Calu3 (cell line): ENCODE measurements at regions of chr3 and their contacts with region 1.

Region 1: DNA sequence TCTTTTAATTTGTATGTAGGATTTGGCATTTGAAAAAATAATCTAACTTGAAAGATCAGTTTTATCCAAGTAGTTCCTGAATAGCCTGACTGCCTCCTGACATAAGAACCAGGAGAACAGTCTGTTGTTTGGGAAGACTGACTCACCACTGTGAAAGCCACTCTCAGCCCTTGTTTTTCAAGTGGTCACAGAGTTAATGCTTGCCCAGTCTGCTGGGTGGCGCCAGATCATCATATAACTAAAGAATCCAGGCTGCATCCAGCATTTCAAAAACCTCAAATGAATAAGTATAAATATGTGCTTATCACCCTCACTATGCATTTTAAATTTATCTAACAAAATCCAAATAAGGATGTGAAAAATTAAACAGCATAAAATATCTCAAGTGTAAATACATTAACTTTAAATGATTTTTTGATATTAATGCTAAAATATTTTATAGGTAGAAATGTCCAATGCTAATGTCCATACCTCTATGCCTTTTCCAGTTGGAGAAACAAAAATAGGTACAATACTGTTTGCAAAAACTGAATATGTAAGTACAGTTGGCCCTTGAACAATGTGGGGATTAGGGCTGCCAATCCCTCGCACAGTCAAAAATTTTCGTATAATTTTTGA is 26.9 kb upstream of the ZBBX start:
- DNase-seq: peak; percentile 74
- H3K4me3 Mint-ChIP-seq: no peak overlapping the region
- H3K27ac Mint-ChIP-seq: no peak overlapping the region
- H3K4me1 Mint-ChIP-seq: peaks cover 7% of the 10 kb centered on the region
- H3K27me3 Mint-ChIP-seq: no peaks in the 10 kb centered on the region
- CTCF ChIP-seq: peak; percentile 49

Region 2: DNA sequence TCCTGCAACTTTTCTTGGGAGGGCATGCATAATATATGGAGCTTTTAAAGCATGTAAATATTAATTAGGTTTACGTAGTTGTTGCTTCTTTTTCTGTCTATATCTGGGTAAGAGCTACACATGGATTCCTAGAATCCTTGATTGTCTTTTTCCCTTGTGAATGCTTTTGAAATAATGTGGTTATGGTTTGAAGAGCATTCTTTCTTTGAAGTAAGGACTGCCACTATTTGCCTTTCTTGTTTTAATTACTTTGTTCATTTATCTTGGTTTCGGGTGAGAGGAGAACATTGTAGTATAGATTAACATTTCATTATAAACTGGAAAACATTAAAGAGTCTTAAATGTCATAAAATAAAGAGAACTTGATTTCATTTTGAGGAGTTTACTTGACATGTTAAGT is 700.9 kb before region 1 on chr3:
- CTCF ChIA-PET with region 1: no interaction called
- intact Hi-C with region 1: no loop called
- DNase-seq: no peak
- H3K4me3 Mint-ChIP-seq: no peak overlapping the region
- H3K27ac Mint-ChIP-seq: no peak overlapping the region
- H3K4me1 Mint-ChIP-seq: no peaks in the 10 kb centered on the region
- H3K27me3 Mint-ChIP-seq: no peaks in the 10 kb centered on the region
- CTCF ChIP-seq: no peak

Region 3: GRCh38 chr3:167684388-167684993 is 277.5 kb after region 1 on chr3:
- CTCF ChIA-PET with region 1: no interaction called
- intact Hi-C with region 1: loop called (anchors 1 kb)
- DNase-seq: peak; percentile 84
- H3K4me3 Mint-ChIP-seq: no peak overlapping the region
- H3K27ac Mint-ChIP-seq: no peak overlapping the region
- H3K4me1 Mint-ChIP-seq: peaks cover 6% of the 10 kb centered on the region
- H3K27me3 Mint-ChIP-seq: no peaks in the 10 kb centered on the region
- CTCF ChIP-seq: peak; percentile 90

Region 4: DNA sequence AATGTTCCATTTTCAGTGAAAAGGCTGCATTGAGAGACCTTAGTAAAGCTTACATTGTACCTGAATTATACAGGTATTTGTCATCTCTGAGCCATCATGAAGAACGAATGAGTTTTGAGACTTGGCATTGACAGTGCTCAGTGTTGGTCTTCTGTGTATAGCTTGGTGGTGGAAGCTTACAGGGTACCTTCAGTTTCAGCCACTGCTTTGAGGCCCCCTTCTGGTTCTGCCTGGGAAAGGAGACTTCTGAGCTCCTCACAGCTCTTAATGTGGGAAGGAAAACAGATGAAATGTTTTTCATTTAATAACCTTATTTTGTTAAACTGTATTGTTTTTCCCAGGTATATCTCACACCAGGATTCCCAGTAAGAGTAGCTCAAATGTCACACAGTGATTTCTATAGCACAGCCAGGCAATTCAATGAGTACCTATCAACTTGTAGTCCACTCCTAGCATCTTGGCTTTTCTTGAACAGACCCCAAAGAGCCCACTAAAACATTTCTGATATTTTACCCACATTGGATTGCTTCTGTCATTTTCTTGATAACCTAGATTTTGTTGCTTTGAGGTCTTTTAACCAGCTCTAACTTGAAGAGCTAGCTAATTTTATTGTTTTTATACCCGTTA is 334.1 kb after region 1 on chr3:
- CTCF ChIA-PET with region 1: no interaction called
- intact Hi-C with region 1: loop called (anchors 1 kb)
- DNase-seq: peak; percentile 64
- H3K4me3 Mint-ChIP-seq: no peak overlapping the region
- H3K27ac Mint-ChIP-seq: no peak overlapping the region
- H3K4me1 Mint-ChIP-seq: peaks cover 11% of the 10 kb centered on the region
- H3K27me3 Mint-ChIP-seq: no peaks in the 10 kb centered on the region
- CTCF ChIP-seq: peak; percentile 59

Region 5: DNA sequence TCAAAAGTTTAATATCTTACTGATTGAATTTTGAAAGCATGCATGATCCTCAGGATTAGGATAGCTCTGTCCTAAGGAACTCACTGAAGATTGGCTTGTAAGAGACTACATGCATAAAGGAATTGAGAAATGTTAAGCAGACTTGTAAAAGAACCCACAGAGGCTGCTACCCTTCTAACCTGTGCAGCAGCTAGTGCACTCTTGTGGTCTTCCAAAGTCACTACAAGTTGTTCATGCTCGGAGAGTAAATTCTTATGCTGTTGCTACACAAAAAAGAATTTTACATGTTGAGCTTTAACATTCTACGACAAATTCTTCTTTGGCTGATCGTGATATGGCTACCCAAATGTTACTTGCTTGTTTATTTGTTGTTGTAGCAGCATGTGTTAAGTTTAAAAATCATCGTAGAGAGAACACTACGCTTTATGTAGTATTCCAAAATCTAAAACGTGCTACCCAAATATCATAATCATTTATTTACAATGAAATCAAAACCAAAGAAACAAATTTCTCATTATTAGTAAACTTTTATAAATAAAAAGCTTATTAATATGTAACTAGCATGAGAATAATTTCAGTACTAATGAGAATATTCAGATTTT is 633.7 kb after region 1 on chr3:
- CTCF ChIA-PET with region 1: no interaction called
- intact Hi-C with region 1: loop called (anchors 5 kb)
- DNase-seq: peak; percentile 22
- H3K4me3 Mint-ChIP-seq: no peak overlapping the region
- H3K27ac Mint-ChIP-seq: no peak overlapping the region
- H3K4me1 Mint-ChIP-seq: no peaks in the 10 kb centered on the region
- H3K27me3 Mint-ChIP-seq: no peaks in the 10 kb centered on the region
- CTCF ChIP-seq: peak; percentile 80